HEK293T (cell line): ENCODE measurements at regions of chr11 and their contacts with region 1.

Region 1: GRCh38 chr11:27718346-27718852 is 18.1 kb upstream of the BDNF start:
- DNase-seq: peak; percentile 53

Region 2: GRCh38 chr11:27698872-27699474 is 19.4 kb before region 1 on chr11:
- CTCF ChIA-PET with region 1: interaction called, 16 read pairs
- POLR2A ChIA-PET with region 1: interaction called, 20 read pairs
- DNase-seq: peak; percentile 82

Region 3: GRCh38 chr11:27705873-27706820 is 12.3 kb before region 1 on chr11:
- CTCF ChIA-PET with region 1: interaction called, 16 read pairs
- POLR2A ChIA-PET with region 1: interaction called, 20 read pairs
- DNase-seq: peak; percentile 59

Region 4: DNA sequence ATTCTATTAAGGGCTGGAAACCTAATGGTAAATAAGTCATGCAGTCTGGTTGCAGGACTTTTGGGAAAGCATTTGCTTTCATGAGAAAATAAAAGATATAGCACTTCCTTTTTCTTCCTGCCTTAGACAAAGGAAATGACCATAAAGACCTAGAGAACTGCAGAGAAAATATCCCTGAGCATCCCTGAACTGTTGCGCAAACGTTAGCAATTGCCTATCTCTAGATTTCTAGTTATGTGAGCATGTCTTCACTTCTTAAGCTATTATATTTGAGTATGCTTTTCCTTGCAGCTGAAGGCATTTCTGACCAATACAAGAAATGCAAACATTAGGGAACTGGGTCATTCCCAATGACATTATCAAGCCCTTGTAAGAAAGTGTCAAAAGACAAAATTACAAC is 278.9 kb after region 1 on chr11:
- CTCF ChIA-PET with region 1: no interaction called
- POLR2A ChIA-PET with region 1: no interaction called
- DNase-seq: no peak